ENCODE measurements at regions of chr19 and their contacts with region 1.

Region 1: DNA sequence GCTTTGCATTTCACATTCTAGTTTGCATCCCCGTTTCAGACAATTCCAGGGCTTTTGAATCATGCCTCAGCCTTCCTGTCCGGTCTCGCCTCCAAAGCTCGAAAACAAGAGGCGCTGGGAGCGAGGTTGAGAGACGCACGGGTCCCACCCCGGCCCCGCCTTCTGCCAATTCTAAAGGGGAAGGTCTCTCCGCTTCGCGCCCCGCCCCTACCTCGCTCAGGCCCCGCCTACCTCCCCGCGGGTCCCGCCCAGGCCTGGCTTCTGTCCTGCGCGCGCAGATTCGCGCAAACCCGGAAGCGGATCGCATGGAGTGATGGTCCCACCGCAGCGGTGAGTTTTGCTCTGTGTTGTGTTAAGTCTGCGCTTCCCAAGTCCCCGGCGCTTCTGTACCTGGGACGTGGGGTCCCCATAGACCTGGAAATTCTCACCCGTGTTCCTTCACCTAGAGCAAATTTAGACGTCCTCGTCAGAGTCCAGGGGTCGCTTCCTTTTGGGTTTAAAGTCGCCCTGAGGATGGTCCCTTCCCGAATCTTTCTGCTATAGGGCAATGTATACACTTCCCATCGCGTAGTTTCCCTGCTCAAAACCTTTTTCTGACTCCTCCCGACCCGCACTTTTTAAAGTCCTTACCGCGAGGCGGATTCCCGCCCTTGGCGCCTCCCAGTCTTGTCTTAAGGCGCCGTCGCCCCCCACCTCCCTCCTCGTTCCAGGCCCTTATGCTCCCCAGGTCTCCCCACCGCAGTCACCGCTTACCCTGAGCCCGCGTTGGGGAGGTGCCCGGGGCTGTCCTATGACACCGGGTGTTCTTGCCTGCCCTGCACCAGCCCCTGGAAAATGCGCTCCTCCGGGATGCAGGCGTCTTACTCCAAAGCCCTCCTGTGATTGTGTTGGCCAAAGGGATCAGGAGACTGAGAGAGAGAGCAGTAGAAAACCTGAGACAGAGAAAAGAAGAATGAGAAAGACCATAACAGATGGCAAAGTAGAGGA is at the start of gene ZNF845:
- DNase-seq: peak; percentile 98
- H3K4me3 Mint-ChIP-seq: peak within 1 kb of the TSS; percentile 94
- H3K27ac Mint-ChIP-seq: peak within 1 kb of the TSS; percentile 87
- H3K4me1 Mint-ChIP-seq: peaks cover 11% of the 10 kb centered on the region
- H3K27me3 Mint-ChIP-seq: peaks cover 7% of the 10 kb centered on the region
- total RNA-seq, gene ZNF845: 5.7 to 5.8 TPM

Region 2: DNA sequence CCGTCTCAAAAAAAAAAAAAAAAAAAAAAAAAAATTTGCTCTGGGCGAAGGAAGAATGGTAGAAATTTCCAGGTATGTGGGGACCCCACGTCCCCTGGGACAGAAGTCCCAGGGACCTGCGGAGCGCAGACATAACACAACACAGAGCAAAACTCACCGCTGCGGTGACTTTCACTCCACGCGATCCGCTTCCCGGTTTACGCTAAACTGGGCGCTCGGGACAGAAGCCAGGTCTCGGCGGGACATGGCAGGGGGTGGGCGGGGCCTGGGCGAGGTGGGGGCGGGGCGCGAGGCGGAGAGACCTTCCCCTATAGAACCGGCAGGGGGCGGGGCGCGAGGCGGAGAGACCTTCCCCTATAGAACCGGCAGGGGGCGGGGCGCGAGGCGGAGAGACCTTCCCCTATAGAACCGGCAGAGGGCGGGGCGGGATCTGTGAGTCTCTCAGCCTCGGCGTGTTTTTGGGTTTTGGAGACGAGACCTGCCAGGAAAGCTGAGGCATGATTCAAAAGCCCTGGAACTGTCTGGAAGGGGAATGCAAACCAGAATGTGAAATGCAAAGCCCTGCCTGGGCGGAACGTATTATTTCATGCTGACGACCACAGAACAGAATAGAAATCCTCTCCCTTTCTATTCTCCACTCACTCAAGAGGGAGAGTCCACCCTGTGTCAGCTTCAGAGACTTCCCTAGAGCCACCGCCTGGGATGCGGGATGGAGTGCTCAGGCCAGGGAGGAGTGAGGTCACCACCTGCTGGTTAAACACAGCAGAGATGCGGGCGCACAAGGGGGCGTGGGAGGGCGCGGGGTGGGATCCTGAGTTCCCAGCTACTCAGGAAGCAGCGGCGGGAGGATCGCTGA is 340.2 kb before region 1 on chr19:
- CTCF ChIA-PET with region 1: no interaction called
- POLR2A ChIA-PET with region 1: no interaction called
- intact Hi-C with region 1: loop called (anchors 10 kb)
- DNase-seq: peak; percentile 92
- H3K4me3 Mint-ChIP-seq: peak overlapping the region; percentile 81
- H3K27ac Mint-ChIP-seq: peak overlapping the region; percentile 42
- H3K4me1 Mint-ChIP-seq: peaks cover 11% of the 10 kb centered on the region
- H3K27me3 Mint-ChIP-seq: peaks cover 1% of the 10 kb centered on the region

Region 3: DNA sequence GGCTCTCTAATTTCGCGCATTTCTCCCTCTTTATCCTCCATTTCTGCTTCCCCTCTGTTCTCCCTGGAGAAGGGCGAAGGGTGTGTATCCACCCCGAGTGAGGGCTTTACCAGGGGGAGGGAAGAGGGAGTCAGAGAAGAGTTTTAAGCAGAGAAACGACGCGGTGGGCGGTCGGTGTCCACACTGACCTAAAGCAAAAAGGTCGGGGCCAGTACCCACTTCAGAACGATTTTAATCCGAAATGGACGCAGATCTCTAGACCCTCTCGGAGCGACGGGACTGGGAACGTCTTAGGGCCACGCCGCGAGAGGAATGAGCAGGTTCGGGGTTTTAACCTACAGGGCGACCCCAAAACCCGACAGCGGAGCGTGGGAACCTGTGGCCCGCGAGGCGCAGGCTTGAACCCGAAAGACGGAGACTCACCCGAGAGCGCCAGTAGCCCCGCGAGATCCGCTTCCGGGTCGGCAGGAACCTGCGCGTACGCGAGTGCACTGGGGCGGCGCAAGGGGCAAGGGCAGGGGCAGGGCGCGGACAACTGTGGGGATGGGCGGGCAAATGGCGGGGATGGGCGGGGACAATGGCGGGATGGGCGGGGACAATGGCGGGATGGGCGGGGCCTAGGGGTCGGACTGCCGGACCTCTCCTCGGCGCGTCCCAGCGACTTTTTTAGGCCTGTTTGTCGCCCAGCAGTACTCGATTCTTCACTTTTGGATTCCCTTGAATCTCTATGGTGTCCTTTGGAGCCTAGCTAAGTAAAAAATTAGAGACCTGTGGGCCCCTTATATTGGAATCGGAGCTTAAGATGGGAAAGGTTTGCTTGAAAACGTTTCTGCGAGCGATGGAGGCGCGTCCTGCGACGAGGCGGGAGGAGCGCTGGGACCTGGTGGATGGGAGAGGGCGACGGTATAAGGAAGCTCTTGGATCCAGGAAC is 79.1 kb before region 1 on chr19 and contains the start of gene ZNF677:
- CTCF ChIA-PET with region 1: no interaction called
- POLR2A ChIA-PET with region 1: no interaction called
- intact Hi-C with region 1: loop called (anchors 2 kb)
- DNase-seq: peak; percentile 90
- H3K4me3 Mint-ChIP-seq: peak within 1 kb of the TSS; percentile 78
- H3K27ac Mint-ChIP-seq: no peak within 1 kb of the TSS
- H3K4me1 Mint-ChIP-seq: peaks cover 10% of the 10 kb centered on the region
- H3K27me3 Mint-ChIP-seq: no peaks in the 10 kb centered on the region
- total RNA-seq, gene ZNF677: 4.6 to 4.9 TPM

Region 4: DNA sequence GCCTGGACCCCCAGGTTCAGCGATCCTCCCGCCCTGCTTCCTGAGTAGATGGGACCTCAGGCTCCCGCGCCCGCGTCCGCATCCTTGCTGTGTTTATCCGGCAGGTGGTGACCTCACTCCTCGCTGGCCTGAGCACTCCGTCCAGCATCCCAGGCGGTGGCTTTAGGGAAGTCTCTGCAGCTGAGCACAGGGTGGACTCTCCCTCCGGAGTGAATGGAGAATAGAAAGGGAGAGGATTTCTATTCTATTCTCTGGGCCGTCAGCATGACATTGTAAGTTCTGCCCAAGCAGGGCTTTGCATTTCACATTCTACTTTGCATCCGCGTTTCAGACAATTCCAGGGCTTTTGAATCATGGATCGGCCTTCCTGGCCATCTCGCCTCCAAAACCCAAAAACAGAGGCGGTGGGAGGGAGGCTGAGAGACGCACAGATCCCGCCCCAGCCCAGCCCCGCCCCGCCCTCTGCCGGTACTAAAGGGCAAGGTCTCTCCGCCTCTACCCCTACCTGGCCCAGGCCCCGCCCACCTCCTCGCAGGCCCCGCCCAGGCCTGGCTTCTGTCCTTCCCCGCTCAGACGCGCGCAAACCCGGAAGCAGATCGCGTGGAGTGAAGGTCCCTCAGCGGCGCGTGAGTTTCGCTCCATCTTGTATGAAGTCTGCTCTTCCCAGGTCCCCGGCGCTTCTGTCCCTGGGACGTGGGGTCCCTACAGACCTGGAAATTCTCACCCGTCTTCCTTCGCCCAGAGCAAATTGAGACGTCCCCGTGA is 31.6 kb after region 1 on chr19 and contains the start of gene ZNF525:
- CTCF ChIA-PET with region 1: no interaction called
- POLR2A ChIA-PET with region 1: no interaction called
- intact Hi-C with region 1: loop called (anchors 2 kb)
- DNase-seq: peak; percentile 98
- H3K4me3 Mint-ChIP-seq: peak within 1 kb of the TSS; percentile 88
- H3K27ac Mint-ChIP-seq: peak within 1 kb of the TSS; percentile 87
- H3K4me1 Mint-ChIP-seq: peaks cover 22% of the 10 kb centered on the region
- H3K27me3 Mint-ChIP-seq: no peaks in the 10 kb centered on the region
- total RNA-seq, gene ZNF525: 14.5 to 19.9 TPM

Measured in activated CD4-positive, alpha-beta memory T cell treated with anti-CD3 and anti-CD28 coated beads for 36 hours (primary cell).